H1 (cell line): ENCODE measurements at regions of chr15 and their contacts with region 1.

Region 1: DNA sequence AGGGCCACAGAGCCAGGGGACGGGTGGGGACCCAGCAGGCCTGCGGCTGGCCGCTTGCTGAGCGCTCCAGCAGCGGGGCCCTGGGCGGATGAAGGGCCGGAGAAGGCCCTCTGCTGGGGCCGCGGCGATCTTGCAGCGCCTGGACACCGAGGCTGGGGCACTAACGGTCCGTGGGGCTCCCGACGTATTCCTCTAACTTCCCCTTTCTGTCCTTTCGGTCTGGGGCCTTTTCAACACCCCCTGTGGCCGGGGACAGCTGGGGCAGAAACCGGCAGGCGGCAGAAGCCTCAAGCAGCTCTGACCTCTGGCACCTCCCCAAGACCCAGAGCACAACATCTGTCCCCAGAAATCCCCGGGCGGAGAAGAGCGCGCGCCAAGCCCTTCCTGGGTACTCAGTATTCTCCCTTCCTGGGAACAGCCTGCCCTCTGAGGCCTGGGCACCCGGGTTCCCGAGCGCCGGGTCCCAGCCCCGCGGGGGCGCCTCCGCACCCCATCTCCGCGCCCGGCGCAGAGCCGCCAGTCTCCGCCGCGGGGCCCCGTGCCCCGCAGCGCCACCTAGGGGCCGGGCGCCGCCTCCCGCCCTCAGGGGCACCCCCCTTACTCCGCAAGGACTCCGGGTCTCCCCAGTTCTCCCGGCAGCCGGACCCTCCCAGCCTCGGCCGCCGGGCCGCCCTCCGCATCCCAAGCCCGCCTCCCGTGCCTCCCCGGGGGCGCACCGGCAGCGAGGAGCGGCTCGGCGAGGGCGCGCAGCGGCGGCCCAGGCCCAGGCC is 582 bp upstream of the SLCO3A1 start:
- DNase-seq: peak in 1 of 2 experiments; percentile 86
- H3K4me3 ChIP-seq: peak overlapping the region; percentile 66 to 86 (median 74)
- H3K27ac ChIP-seq: no peak overlapping the region
- H3K4me1 ChIP-seq: peaks cover 7 to 15% (median 11%) of the 10 kb centered on the region in 4 experiments; a peak in 6 of 7 replicates
- H3K27me3 ChIP-seq: peaks cover 0 to 11% (median 10%) of the 10 kb centered on the region in 4 experiments; a peak in 5 of 7 replicates
- CTCF ChIP-seq: peak; percentile 63 to 88 (median 76)
- EP300 ChIP-seq: no peak
- POLR2A ChIP-seq: peak in 1 of 2 experiments; percentile 19; a peak in 1 of 3 replicates
- RAD21 ChIP-seq: peak; percentile 50 to 56

Region 2: GRCh38 chr15:91302588-91303439 is 550.1 kb before region 1 on chr15:
- CTCF ChIA-PET with region 1: interaction called, 13 read pairs
- POLR2A ChIA-PET with region 1: no interaction called
- DNase-seq: peak; percentile 31 to 52
- H3K4me3 ChIP-seq: no peak overlapping the region
- H3K27ac ChIP-seq: no peak overlapping the region
- H3K4me1 ChIP-seq: no peaks in the 10 kb centered on the region
- H3K27me3 ChIP-seq: peaks cover 0 to 3% (median 2%) of the 10 kb centered on the region in 4 experiments; a peak in 3 of 7 replicates
- CTCF ChIP-seq: peak; percentile 18 to 82 (median 77)
- EP300 ChIP-seq: no peak
- POLR2A ChIP-seq: no peak
- RAD21 ChIP-seq: peak; percentile 98 to 99

Region 3: GRCh38 chr15:91839867-91840266 is 13.1 kb before region 1 on chr15:
- CTCF ChIA-PET with region 1: interaction called, 13 read pairs
- POLR2A ChIA-PET with region 1: no interaction called
- DNase-seq: no peak
- H3K4me3 ChIP-seq: no peak overlapping the region
- H3K27ac ChIP-seq: no peak overlapping the region
- H3K4me1 ChIP-seq: peaks cover 0 to 7% (median 5%) of the 10 kb centered on the region in 4 experiments; a peak in 2 of 7 replicates
- H3K27me3 ChIP-seq: peaks cover 0 to under 1% (median under 1%) of the 10 kb centered on the region in 4 experiments; a peak in 2 of 7 replicates
- CTCF ChIP-seq: no peak
- EP300 ChIP-seq: no peak
- POLR2A ChIP-seq: no peak
- RAD21 ChIP-seq: no peak; a peak in 1 of 4 replicates

Region 4: DNA sequence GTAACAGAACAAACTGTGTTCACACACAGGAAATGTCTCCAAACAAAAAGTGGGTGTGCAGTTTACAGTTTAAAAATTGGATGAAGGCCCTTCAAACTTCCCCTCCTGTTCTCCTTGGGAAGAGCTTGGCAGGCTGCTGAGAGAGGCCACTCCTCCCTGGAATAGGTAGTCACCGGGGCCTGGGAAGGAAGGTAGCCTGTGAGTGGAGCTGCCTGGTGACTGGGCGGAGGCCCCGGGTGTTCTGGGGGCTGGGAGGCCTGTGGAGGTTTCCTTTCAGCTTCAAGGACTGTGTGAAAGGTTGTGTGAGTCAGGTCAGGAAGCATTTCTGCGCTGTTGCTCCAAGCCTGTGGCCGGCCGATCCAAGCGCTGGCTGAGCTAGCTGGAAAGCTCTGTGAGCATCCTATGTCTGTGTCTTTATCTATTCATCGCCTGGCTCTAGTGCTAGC is 14.7 kb after region 1 on chr15:
- CTCF ChIA-PET with region 1: interaction called, 108 read pairs
- POLR2A ChIA-PET with region 1: interaction called, 3 read pairs
- DNase-seq: no peak
- H3K4me3 ChIP-seq: no peak overlapping the region
- H3K27ac ChIP-seq: no peak overlapping the region
- H3K4me1 ChIP-seq: peaks cover 0 to 13% (median 9%) of the 10 kb centered on the region in 4 experiments; a peak in 6 of 7 replicates
- H3K27me3 ChIP-seq: no peaks in the 10 kb centered on the region
- CTCF ChIP-seq: no peak
- EP300 ChIP-seq: no peak
- POLR2A ChIP-seq: no peak
- RAD21 ChIP-seq: no peak

Region 5: DNA sequence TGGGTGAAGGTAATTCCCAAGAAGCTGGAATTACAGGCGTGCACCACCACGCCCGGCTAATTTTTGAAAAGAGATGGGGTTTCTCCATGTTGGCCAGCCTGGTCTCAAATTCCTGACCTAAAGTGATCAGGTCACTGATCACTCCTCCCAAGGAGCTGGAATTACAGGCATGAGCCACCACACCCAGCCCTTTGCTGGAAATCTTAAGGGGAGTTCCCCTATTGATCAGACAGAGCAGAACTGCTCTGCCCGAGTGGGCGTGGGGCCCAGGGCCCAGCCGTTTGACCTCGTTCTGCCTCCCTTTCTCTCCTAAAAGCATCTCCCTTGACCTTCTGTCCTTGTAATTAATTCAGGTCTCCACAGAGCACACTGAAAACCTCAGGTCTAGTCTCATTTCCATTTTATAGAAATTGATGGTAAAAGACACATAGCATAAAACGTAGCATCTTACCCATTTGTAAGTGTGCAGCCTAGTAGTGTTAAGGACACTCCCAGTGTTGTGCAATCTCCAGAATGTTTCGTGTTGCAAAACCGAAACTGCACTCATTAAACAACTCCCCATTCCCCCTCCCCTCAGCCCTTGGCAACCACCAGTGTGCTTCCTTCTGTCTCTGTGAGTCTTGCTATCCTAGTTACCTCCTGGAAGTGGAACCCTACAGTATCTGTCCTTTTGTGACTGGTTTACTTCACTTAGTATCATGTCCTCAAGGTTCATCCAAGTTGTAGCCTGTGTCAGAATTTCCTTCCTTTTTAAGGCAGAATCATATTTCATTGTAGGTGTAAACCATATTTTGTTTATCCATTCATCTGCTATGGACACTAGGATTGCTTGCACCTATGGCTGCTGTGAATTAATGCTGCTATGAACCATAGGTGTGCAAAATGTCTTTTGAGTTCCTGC is 90.0 kb after region 1 on chr15:
- CTCF ChIA-PET with region 1: interaction called, 10 read pairs
- POLR2A ChIA-PET with region 1: interaction called, 3 read pairs
- DNase-seq: no peak
- H3K4me3 ChIP-seq: no peak overlapping the region
- H3K27ac ChIP-seq: no peak overlapping the region
- H3K4me1 ChIP-seq: peaks cover 16 to 28% (median 22%) of the 10 kb centered on the region in 4 experiments
- H3K27me3 ChIP-seq: no peaks in the 10 kb centered on the region
- CTCF ChIP-seq: no peak
- EP300 ChIP-seq: no peak
- POLR2A ChIP-seq: no peak
- RAD21 ChIP-seq: no peak

Region 6: GRCh38 chr15:91956026-91956723 is 103.2 kb after region 1 on chr15:
- CTCF ChIA-PET with region 1: no interaction called
- POLR2A ChIA-PET with region 1: no interaction called
- DNase-seq: no peak
- H3K4me3 ChIP-seq: no peak overlapping the region
- H3K27ac ChIP-seq: no peak overlapping the region
- H3K4me1 ChIP-seq: peaks cover 3 to 9% (median 5%) of the 10 kb centered on the region in 4 experiments; a peak in 5 of 7 replicates
- H3K27me3 ChIP-seq: no peaks in the 10 kb centered on the region
- CTCF ChIP-seq: no peak
- EP300 ChIP-seq: no peak
- POLR2A ChIP-seq: no peak
- RAD21 ChIP-seq: no peak